ENCODE measurements at regions of chr5 and their contacts with region 1.

Region 1: GRCh38 chr5:134289509-134290113 is 63.7 kb upstream of the PPP2CA start:
- DNase-seq: peak; percentile 52 to 85 (median 63)
- ATAC-seq: peak; percentile 99
- H3K4me3 ChIP-seq: no peak overlapping the region
- H3K27ac ChIP-seq: no peak overlapping the region
- H3K4me1 ChIP-seq: no peaks in the 10 kb centered on the region
- H3K27me3 ChIP-seq: no peaks in the 10 kb centered on the region; a peak in 1 of 5 replicates
- CTCF ChIP-seq: peak; percentile 75 to 93 (median 81)
- EP300 ChIP-seq: no peak
- POLR2A ChIP-seq: no peak
- RAD21 ChIP-seq: peak; percentile 99

Region 2: GRCh38 chr5:134041570-134042411 is 247.8 kb before region 1 on chr5:
- CTCF ChIA-PET with region 1: interaction called, 31 read pairs
- POLR2A ChIA-PET with region 1: no interaction called
- in situ Hi-C with region 1: loop called (anchors 5 kb)
- intact Hi-C with region 1: loop called (anchors 1 kb)
- DNase-seq: no peak
- ATAC-seq: no peak
- H3K4me3 ChIP-seq: no peak overlapping the region
- H3K27ac ChIP-seq: no peak overlapping the region
- H3K4me1 ChIP-seq: no peaks in the 10 kb centered on the region; a peak in 1 of 5 replicates
- H3K27me3 ChIP-seq: peaks cover 2 to 31% of the 10 kb centered on the region in 2 experiments; a peak in 2 of 5 replicates
- CTCF ChIP-seq: no peak
- EP300 ChIP-seq: no peak
- POLR2A ChIP-seq: no peak
- RAD21 ChIP-seq: no peak

Region 3: DNA sequence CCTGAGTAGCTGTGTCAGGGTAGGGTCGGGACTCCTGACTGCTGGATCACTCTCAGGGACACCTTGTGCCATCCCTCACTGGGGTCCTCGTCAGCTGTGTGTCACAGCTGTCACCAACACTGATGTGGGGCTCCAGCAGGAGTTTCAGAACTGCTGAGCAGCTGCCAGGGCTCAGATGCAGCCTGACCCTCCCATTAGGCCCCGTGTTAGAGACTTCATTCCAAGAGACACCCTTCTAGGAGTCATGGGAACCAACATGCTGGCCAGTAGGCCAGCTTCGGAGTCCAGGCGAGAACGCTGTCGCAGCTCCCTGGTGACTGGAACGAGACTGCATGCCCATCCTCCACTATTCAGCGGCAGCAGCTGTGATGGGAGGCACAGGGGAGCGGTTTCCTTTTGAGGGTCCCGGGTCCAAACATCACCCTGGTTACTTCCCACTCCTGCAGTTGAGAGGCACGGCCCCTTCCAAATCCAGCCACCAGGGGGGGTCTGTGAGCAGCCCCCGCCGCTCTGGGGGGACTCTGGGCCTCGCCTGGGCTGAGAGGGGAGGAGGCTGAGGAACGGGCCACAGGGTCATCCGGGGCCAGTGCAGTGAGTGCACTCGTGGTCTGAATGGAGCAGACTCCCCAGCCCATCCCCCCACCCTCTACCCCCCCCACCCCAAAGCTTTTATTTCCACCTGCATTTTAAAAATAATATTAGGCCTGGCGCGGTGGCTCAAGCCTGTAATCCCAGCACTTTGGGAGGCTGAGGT is 187.7 kb before region 1 on chr5:
- CTCF ChIA-PET with region 1: interaction called, 3 read pairs
- POLR2A ChIA-PET with region 1: no interaction called
- in situ Hi-C with region 1: no loop called
- intact Hi-C with region 1: loop called (anchors 1 kb)
- DNase-seq: peak; percentile 75 to 93 (median 90)
- ATAC-seq: peak; percentile 94
- H3K4me3 ChIP-seq: no peak overlapping the region
- H3K27ac ChIP-seq: no peak overlapping the region
- H3K4me1 ChIP-seq: peaks cover 0 to 16% of the 10 kb centered on the region in 2 experiments; a peak in 3 of 5 replicates
- H3K27me3 ChIP-seq: no peaks in the 10 kb centered on the region
- CTCF ChIP-seq: peak; percentile 83 to 92 (median 88)
- EP300 ChIP-seq: no peak
- POLR2A ChIP-seq: no peak
- RAD21 ChIP-seq: peak; percentile 16 to 78; a peak in 2 of 4 replicates

Region 4: DNA sequence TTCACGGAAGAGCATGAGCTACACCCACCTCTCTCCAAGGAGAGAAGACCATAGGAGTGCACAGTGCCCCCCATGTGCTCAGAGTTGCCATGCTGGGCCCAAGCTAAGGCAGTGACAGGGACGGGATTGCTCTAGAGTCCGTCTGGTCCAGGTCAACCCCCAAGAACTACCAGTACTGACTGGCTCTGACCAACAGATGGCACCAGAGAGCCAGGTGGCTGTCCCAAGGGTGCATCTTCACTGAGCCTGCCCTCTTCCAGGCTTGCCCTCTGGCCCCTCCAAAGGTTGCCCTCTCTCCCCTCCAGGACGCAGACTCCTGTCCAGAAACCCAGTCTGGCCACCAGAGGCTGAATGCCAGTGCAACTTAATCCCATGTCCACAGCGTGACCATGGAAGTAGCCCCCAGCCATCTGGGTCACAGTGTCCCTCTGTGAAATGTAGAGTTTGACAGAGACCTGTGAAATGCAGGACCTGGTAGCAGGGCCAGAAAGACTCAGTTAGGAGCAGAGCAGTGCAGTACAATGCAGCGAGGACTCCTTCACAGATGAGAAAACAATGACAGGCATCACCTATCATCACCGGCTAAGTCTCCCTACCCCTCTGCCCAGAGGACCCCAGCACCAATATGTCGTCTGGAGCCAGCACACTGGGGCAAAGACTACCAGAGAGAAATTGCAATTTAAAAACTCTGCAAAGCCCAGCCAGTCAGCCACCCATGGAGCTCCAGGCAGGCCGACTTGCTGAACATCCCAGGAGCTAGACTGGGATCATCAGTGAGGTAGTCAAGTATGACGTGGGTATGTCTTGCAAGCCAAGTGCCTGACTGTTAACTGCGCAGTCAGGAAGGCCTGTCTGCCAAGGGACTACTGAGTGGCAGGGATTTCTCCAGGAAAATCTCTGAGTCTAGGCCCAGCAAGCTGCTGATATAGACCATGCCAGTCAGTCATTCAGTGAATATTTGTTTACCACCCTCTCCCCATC is 105.2 kb before region 1 on chr5:
- CTCF ChIA-PET with region 1: interaction called, 63 read pairs
- POLR2A ChIA-PET with region 1: interaction called, 3 read pairs
- in situ Hi-C with region 1: loop called (anchors 5 kb)
- intact Hi-C with region 1: loop called (anchors 1 kb)
- DNase-seq: peak; percentile 81 to 83 (median 83)
- ATAC-seq: peak; percentile 90
- H3K4me3 ChIP-seq: no peak overlapping the region
- H3K27ac ChIP-seq: no peak overlapping the region
- H3K4me1 ChIP-seq: peaks cover 12 to 19% of the 10 kb centered on the region in 2 experiments; a peak in 4 of 5 replicates
- H3K27me3 ChIP-seq: no peaks in the 10 kb centered on the region
- CTCF ChIP-seq: peak; percentile 89 to 92 (median 90)
- EP300 ChIP-seq: no peak
- POLR2A ChIP-seq: no peak
- RAD21 ChIP-seq: peak; percentile 89 to 98

Region 5: DNA sequence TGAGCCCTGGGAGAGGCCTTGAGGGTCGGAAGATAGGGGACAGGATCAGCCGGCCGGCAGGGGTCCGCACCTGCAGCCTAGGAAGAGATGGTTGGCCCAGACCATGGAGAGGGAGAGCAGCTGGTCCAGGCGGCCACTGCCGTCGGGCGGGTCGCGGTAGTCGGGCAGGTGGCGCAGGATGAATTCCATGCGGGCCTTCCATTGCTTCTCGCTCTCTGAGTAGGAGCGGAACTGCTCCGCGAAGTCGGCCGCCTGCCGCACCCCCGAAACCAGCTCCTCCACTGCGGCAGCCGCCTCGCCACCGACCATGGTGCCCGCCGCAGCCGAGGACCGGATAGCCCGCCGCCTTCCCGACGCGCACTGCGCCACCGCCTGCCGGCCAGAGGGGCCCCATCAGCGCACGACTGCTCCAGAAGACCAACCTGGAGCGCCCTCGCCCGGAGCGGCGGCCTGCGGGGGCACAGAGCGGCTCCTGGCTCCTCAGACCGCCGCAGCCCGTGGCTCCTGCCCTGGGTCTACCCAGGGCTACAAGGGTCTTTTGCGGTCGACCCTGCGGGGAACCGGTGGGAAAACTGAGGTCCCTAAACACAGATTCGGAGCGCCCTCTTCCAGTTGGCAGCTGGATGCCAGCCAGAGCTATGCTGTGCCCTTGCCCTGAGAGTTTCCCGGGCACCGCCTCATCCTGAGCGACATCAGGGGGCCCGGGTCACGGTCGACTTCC is 122.1 kb after region 1 on chr5 and contains the start of gene CDKN2AIPNL:
- CTCF ChIA-PET with region 1: no interaction called
- POLR2A ChIA-PET with region 1: no interaction called
- in situ Hi-C with region 1: no loop called
- intact Hi-C with region 1: no loop called
- DNase-seq: peak; percentile 89 to 92 (median 91)
- ATAC-seq: peak; percentile 99
- H3K4me3 ChIP-seq: peak within 1 kb of the TSS; percentile 84
- H3K27ac ChIP-seq: peak within 1 kb of the TSS; percentile 73
- H3K4me1 ChIP-seq: peaks cover 18 to 25% of the 10 kb centered on the region in 2 experiments
- H3K27me3 ChIP-seq: no peaks in the 10 kb centered on the region
- CTCF ChIP-seq: peak; percentile 67 to 92 (median 79)
- EP300 ChIP-seq: peak; percentile 41; the same call in 1 of the 2 replicates
- POLR2A ChIP-seq: peak; percentile 95
- RAD21 ChIP-seq: peak; percentile 49 to 60
- polyA plus RNA-seq, gene CDKN2AIPNL: 19.9 to 30.7 TPM